Posterior vena cava (tissue), 2 donors: ENCODE measurements at regions of chr2 and their contacts with region 1.

Region 1: GRCh38 chr2:128232965-128233789 is 85.5 kb downstream of the HS6ST1 start:
- DNase-seq: peak; percentile 97

Region 2: DNA sequence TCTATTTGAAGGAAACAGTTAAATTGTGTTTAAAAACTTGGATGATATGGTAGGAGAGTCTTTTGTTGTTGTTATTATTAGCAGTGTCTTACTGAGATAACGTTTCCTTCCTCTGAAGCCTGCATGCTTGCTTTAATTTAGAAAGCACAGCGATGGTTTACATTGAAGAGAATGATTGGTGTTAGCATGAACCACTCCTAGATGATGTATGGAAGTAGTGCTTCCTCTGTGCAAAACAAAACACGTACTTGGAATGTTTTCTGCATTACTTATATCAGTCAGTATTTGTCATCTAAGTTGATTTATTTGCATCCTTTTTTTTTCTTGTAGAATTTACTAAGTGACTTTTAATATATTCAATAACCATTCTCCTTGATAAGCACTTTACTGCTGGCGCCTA is 53.1 kb before region 1 on chr2:
- intact Hi-C with region 1: loop called in 1 of 2 experiments (anchors 5 kb)
- DNase-seq: no peak

Region 3: DNA sequence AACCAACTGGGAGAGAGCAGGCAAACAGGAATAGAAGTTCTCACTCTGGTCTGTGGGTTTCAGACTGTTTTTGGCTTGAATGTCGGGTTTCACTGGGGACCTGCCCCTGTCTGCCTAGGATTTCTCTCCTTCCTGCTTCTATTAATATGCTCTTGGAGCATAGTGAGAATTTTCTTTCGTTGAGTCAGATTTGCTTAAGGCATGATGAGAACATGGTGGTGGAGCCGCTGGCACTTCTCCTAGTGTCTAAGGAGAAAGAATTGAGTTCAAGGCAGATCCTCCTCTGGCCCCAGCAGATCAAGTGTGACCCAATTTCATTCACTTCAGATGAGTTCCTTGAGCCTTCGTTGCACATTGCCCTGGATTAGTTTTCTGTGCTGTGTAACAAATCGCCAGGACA is 189.4 kb after region 1 on chr2:
- intact Hi-C with region 1: no loop called
- DNase-seq: peak; percentile 81